ENCODE measurements at regions of chr13 and their contacts with region 1.

Region 1: GRCh38 chr13:51995677-51996551 is 15.3 kb downstream of the ATP7B start:
- DNase-seq: no peak
- ATAC-seq: peak; percentile 81
- H3K4me3 ChIP-seq: no peak overlapping the region
- H3K27ac ChIP-seq: peak overlapping the region; percentile 37
- H3K4me1 ChIP-seq: peaks cover 10% of the 10 kb centered on the region
- H3K27me3 ChIP-seq: no peaks in the 10 kb centered on the region
- CTCF ChIP-seq: no peak

Region 2: DNA sequence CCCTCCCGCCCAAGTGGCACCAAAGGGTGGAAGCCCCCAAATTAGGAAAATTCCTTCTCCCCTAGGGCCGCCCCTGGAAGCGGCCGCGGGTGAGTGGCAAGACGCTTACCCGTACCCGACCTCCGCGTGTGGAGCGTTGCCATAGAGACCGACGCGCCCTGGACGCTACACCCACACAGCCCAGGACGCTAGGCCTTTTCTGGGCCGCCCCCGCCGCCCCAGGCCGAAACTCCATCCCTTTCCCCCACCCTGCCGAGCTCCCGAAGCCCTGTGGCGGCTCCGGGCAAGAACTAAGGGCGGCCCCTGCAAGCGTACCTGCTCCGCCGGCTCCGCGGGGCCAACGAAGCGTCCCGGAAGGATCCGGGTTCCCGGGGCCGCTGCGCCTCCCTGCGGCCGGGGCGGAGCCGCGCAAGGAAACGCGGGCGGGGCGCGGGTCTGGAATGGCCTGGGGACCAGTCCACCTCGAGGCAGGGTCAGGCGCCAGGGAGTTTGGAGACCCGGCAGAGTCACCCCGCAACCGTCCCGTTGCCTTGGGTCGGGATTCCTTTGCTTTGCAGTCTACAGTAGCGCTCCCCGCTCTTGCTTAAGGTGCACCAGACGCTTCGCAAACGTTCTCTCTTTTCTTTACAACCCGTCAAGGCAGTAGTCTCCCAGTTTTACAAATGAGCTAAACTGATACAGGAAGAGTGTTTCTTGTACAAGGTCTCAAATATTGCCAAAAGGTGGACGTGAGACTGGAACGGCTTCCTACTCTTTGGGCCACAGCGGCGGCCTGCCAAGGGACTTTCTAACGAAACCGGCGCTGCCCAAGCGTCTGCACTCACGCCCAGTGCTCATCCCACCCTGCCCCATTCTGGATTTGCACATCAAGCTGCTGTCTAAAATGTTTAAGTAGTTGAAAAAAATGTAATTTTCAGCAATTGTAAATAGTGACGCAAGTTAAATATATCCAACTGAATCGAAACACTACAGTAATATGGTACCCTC is 133.1 kb after region 1 on chr13 and contains the start of gene NEK5:
- intact Hi-C with region 1: loop called (anchors 10 kb)
- DNase-seq: peak; percentile 86
- ATAC-seq: peak; percentile 95
- H3K4me3 ChIP-seq: peak within 1 kb of the TSS; percentile 79
- H3K27ac ChIP-seq: no peak within 1 kb of the TSS
- H3K4me1 ChIP-seq: peaks cover 10% of the 10 kb centered on the region
- H3K27me3 ChIP-seq: no peaks in the 10 kb centered on the region
- CTCF ChIP-seq: peak; percentile 80
- total RNA-seq, gene NEK5: 0.52 TPM